Naive thymus-derived CD4-positive, alpha-beta T cell (primary cell): ENCODE measurements at regions of chr1 and their contacts with region 1.

Region 1: GRCh38 chr1:214427871-214428277 is 123.5 kb downstream of the PTPN14 start:
- DNase-seq: peak in 8 of 9 donors; percentile 54 to 82 (median 71)
- ATAC-seq: peak; percentile 95
- H3K4me3 ChIP-seq: no peak overlapping the region
- H3K4me3 Mint-ChIP-seq: peak overlapping the region; percentile 50 to 81 (median 64)
- H3K27ac ChIP-seq: no peak overlapping the region
- H3K27ac Mint-ChIP-seq: peak overlapping the region; percentile 64 to 98 (median 85)
- H3K4me1 ChIP-seq: peaks cover 11 to 18% of the 10 kb centered on the region in 2 donors
- H3K4me1 Mint-ChIP-seq: peaks cover 18 to 48% (median 34%) of the 10 kb centered on the region in 7 donors
- H3K27me3 ChIP-seq: no peaks in the 10 kb centered on the region
- H3K27me3 Mint-ChIP-seq: peaks cover 0 to 3% (median 0%) of the 10 kb centered on the region in 5 donors

Region 2: DNA sequence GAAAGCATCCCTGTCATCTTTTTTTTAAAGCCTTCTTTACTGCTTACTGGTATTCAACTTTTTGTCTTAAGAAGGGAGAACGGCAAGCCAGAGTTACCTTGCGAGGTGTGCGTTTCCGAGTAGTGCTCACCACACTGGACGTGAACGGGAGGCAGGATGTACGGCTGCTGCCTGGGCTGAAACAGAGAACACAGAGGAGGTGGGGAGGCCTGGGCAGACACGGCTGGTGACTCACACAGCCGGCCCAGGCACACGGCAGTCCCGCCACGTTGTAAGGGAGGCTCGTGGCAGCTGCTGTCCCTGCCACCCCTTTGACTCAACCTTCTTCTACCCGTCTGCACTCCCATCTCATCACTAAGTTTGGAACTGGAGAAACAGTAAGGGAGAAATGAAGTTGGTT is 41.1 kb before region 1 on chr1:
- CTCF ChIA-PET with region 1: no interaction called
- POLR2A ChIA-PET with region 1: no interaction called
- intact Hi-C with region 1: loop called in 1 of 2 experiments (anchors 5 kb)
- DNase-seq: peak in 1 of 9 donors; percentile 34
- ATAC-seq: no peak
- H3K4me3 ChIP-seq: no peak overlapping the region
- H3K4me3 Mint-ChIP-seq: peak overlapping the region in 1 of 10 donors; percentile 80
- H3K27ac ChIP-seq: no peak overlapping the region
- H3K27ac Mint-ChIP-seq: peak overlapping the region in 2 of 9 donors; percentile 47 to 94
- H3K4me1 ChIP-seq: no peaks in the 10 kb centered on the region
- H3K4me1 Mint-ChIP-seq: peaks cover 0 to 26% (median 0%) of the 10 kb centered on the region in 7 donors
- H3K27me3 ChIP-seq: no peaks in the 10 kb centered on the region
- H3K27me3 Mint-ChIP-seq: no peaks in the 10 kb centered on the region

Region 3: GRCh38 chr1:214404154-214404553 is 23.7 kb before region 1 on chr1:
- CTCF ChIA-PET with region 1: no interaction called
- POLR2A ChIA-PET with region 1: no interaction called
- intact Hi-C with region 1: loop called in 1 of 2 experiments (anchors 2 kb)
- DNase-seq: no peak
- ATAC-seq: no peak
- H3K4me3 ChIP-seq: no peak overlapping the region
- H3K4me3 Mint-ChIP-seq: no peak overlapping the region
- H3K27ac ChIP-seq: no peak overlapping the region
- H3K27ac Mint-ChIP-seq: peak overlapping the region in 1 of 9 donors; percentile 3
- H3K4me1 ChIP-seq: no peaks in the 10 kb centered on the region
- H3K4me1 Mint-ChIP-seq: peaks cover 0 to 44% (median 4%) of the 10 kb centered on the region in 7 donors
- H3K27me3 ChIP-seq: no peaks in the 10 kb centered on the region
- H3K27me3 Mint-ChIP-seq: peaks cover 0 to 4% (median 0%) of the 10 kb centered on the region in 5 donors

Region 4: GRCh38 chr1:214602764-214603657 is 175.1 kb after region 1 on chr1 and contains the start of gene CENPF:
- CTCF ChIA-PET with region 1: no interaction called
- POLR2A ChIA-PET with region 1: no interaction called
- intact Hi-C with region 1: loop called (anchors 5 kb)
- DNase-seq: peak; percentile 79 to 96 (median 94)
- ATAC-seq: peak; percentile 99
- H3K4me3 ChIP-seq: peak within 1 kb of the TSS; percentile 60
- H3K4me3 Mint-ChIP-seq: peak within 1 kb of the TSS; percentile 86 to 97 (median 92)
- H3K27ac ChIP-seq: peak within 1 kb of the TSS; percentile 48
- H3K27ac Mint-ChIP-seq: peak within 1 kb of the TSS; percentile 52 to 98 (median 87)
- H3K4me1 ChIP-seq: peaks cover 0 to 6% of the 10 kb centered on the region in 2 donors
- H3K4me1 Mint-ChIP-seq: peaks cover 6 to 29% (median 24%) of the 10 kb centered on the region in 7 donors
- H3K27me3 ChIP-seq: no peaks in the 10 kb centered on the region
- H3K27me3 Mint-ChIP-seq: peaks cover 0 to 2% (median 0%) of the 10 kb centered on the region in 5 donors
- total RNA-seq, gene CENPF: 2.1 to 79.9 (median 4.1) TPM